Dorsolateral prefrontal cortex (tissue), 120 donors: ENCODE measurements at regions of chr17 and their contacts with region 1.

Region 1: DNA sequence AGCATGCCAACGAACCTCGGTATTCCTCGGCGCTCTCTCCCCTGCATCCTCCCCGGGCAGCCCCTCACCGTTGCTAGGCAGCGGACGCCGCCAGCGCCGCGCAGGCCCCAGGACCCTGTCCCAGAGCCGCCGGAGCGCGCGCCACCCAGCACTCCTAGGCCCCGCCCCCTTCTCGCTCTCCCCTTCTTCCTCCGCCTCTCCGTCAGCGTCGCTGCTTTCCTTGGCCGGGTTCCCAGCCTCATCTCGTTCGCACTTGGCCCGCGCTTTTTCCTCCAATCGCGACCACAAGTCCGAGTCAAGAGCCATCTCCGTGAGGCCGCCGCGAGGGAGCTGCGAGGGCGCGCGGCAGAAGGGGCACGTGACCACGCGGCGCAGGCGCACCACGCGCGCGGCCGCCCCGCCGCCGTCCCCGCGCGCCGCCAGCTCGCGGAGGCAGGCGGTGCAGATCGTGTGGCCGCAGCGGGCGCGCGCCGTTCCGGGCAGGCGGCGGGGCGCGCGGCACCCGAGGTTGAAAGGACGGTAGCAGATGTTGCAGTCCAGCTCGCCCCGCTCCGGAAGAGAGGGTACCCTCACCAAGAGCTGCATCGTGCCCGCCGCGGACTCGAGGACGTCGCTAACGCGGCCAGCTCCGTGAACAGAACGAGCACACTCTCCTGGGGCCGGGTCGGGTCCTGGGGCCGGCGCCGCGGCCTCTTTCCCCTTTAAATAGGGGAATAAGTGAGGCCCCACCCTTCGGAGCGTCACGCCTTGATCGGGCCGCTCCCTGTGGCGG is at the start of gene RNF227:
- DNase-seq: peak; percentile 70 to 90 (median 84)
- H3K4me3 ChIP-seq: peak within 1 kb of the TSS; percentile 57 to 97 (median 80)
- H3K27ac ChIP-seq: peak within 1 kb of the TSS; percentile 91 to 100 (median 98)
- H3K27me3 ChIP-seq: no peaks in the 10 kb centered on the region
- CTCF ChIP-seq: peak in 24 of 56 donors; percentile 5 to 56 (median 26)
- total RNA-seq, gene RNF227: 3.8 to 10.7 (median 6.7) TPM

Region 2: GRCh38 chr17:7887482-7888183 is 28.2 kb before region 1 on chr17:
- intact Hi-C with region 1: loop called (anchors 1 to 2 kb)
- DNase-seq: peak; percentile 76 to 95 (median 90)
- H3K4me3 ChIP-seq: peak overlapping the region; percentile 30 to 87 (median 73)
- H3K27ac ChIP-seq: peak overlapping the region; percentile 26 to 99 (median 92)
- H3K27me3 ChIP-seq: no peaks in the 10 kb centered on the region
- CTCF ChIP-seq: peak in 14 of 56 donors; percentile 7 to 49 (median 22)

Region 3: DNA sequence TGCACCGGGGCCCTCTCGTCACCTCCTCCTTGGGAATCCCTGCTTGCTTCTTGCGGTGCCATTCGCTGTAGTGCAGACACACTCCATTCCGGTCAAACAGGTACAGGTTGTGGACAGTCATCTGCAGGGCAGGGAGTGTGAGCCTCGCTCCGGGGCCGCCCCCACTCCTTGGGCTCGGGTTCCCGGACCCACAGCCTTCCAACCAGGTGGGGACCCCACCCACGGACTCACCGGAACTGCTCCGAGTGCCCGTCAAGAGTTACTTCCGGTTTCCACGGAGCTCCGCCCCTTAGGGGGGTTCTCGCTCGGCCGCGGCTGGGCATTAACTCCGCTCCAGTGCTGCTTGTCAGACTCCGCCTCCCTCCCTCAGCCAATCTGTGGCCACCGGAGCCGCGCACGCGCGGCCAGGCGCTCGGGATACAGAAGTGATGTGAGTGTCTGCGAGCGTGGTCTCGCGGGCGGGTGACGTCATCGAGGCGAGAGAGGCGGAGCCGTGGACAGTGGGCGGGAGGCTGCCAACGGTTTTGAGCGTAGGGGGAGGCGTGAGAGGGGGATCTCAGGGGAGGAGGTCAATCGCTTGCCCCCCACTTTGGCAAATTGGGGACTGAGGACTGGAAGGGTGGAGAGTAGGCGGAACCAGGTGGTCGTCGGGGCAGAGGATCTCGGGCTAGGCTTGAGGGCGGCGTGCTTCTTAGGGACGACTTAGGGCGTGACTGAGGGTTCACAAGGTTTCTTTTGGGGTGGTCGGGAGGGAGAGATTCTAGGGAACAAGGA is 16.1 kb after region 1 on chr17 and contains the starts of genes CNTROB and TRAPPC1:
- intact Hi-C with region 1: loop called (anchors 1 to 2 kb)
- DNase-seq: peak; percentile 99 to 100 (median 100)
- H3K4me3 ChIP-seq: peak within 1 kb of the TSS; percentile 73 to 99 (median 89)
- H3K27ac ChIP-seq: peak within 1 kb of the TSS in 53 of 59 donors; percentile 6 to 93 (median 75)
- H3K27me3 ChIP-seq: no peaks in the 10 kb centered on the region
- CTCF ChIP-seq: peak in 23 of 56 donors; percentile 10 to 51 (median 23)
- total RNA-seq, gene CNTROB: 13.4 to 35.9 (median 20.7) TPM
- total RNA-seq, gene TRAPPC1: 58.5 to 141 (median 98.0) TPM

Region 4: DNA sequence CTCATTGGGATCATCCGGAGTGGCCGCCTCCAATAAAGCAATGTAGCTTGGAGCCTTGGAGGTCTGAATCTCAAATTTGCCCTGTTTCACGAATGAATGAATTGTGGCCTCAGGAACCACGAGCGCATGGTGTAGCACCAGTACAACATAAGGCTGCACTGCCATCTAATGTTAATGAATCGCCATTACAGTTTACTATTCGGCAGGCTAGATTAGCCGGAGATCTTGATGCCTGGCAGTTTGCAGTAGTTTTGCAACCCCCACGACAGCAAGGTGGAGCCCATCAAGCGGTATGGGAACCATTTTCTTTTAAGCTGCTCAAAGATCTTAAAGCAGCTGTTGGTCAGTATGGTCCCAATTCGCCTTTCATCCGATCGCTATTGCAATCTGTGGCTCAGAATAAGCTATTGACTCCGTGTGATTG is 141.9 kb after region 1 on chr17:
- intact Hi-C with region 1: loop called (anchors 5 kb)
- DNase-seq: peak in 7 of 10 donors; percentile 25 to 58 (median 48)
- H3K4me3 ChIP-seq: peak overlapping the region in 4 of 59 donors; percentile 1 to 35 (median 11)
- H3K27ac ChIP-seq: no peak overlapping the region
- H3K27me3 ChIP-seq: peaks cover 0 to 53% (median 34%) of the 10 kb centered on the region in 45 donors
- CTCF ChIP-seq: peak; percentile 56 to 93 (median 80)

Region 5: GRCh38 chr17:8091033-8091687 is 175.4 kb after region 1 on chr17:
- intact Hi-C with region 1: no loop called
- DNase-seq: no peak
- H3K4me3 ChIP-seq: no peak overlapping the region
- H3K27ac ChIP-seq: no peak overlapping the region
- H3K27me3 ChIP-seq: peaks cover 0 to 24% (median 3%) of the 10 kb centered on the region in 45 donors
- CTCF ChIP-seq: no peak